B cell (primary cell): ENCODE measurements at regions of chr1 and their contacts with region 1.

Region 1: DNA sequence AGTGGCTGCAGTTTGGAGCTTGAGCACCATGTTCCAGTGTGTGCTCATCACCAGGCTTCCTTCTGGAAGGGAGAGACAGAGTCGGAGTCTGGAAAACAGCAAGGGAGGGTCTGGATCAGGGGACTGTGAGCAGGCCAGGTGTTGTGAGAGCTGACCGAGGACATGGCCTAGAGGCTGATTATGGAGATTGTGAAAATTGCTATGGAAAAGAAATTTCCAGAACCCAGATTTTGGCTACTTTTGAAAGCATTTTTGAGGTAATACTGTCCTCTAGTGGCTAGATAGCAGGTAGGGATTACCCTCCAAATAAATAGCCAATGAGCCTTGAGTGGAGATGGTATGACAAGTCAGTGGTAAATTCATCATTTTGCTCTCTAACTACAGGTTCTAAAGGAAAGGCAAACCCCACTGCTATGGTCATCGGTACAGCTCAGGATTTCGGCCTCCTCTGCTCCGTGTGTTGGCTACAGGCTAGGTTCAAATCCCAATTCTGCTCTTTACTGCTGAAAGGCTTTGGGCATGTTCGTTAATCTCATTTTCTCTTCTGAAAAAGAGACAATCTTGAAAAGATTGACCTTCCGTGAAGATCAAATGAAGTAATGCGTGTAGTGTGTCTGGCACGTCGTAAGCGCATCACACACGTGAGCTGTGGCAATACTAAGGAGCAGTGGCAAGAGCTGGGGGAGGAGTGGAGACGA is 1.0 kb upstream of the HAO2 start:
- DNase-seq: no peak
- ATAC-seq: no peak
- H3K4me3 ChIP-seq: no peak overlapping the region
- H3K4me3 Mint-ChIP-seq: no peak overlapping the region
- H3K27ac ChIP-seq: no peak overlapping the region
- H3K27ac Mint-ChIP-seq: no peak overlapping the region
- H3K4me1 ChIP-seq: no peaks in the 10 kb centered on the region
- H3K4me1 Mint-ChIP-seq: no peaks in the 10 kb centered on the region
- H3K27me3 ChIP-seq: no peaks in the 10 kb centered on the region
- H3K27me3 Mint-ChIP-seq: peaks cover 14% of the 10 kb centered on the region
- CTCF ChIP-seq: peak; percentile 45

Region 2: GRCh38 chr1:118151312-118151937 is 1216.2 kb before region 1 on chr1:
- CTCF ChIA-PET with region 1: interaction called, 3 read pairs
- POLR2A ChIA-PET with region 1: no interaction called
- intact Hi-C with region 1: loop called (anchors 5 kb)
- DNase-seq: peak; percentile 43
- ATAC-seq: no peak
- H3K4me3 ChIP-seq: no peak overlapping the region
- H3K4me3 Mint-ChIP-seq: no peak overlapping the region
- H3K27ac ChIP-seq: no peak overlapping the region
- H3K27ac Mint-ChIP-seq: no peak overlapping the region
- H3K4me1 ChIP-seq: no peaks in the 10 kb centered on the region
- H3K4me1 Mint-ChIP-seq: no peaks in the 10 kb centered on the region
- H3K27me3 ChIP-seq: no peaks in the 10 kb centered on the region
- H3K27me3 Mint-ChIP-seq: no peaks in the 10 kb centered on the region
- CTCF ChIP-seq: peak; percentile 77